ENCODE measurements at regions of chr3 and their contacts with region 1.

Region 1: DNA sequence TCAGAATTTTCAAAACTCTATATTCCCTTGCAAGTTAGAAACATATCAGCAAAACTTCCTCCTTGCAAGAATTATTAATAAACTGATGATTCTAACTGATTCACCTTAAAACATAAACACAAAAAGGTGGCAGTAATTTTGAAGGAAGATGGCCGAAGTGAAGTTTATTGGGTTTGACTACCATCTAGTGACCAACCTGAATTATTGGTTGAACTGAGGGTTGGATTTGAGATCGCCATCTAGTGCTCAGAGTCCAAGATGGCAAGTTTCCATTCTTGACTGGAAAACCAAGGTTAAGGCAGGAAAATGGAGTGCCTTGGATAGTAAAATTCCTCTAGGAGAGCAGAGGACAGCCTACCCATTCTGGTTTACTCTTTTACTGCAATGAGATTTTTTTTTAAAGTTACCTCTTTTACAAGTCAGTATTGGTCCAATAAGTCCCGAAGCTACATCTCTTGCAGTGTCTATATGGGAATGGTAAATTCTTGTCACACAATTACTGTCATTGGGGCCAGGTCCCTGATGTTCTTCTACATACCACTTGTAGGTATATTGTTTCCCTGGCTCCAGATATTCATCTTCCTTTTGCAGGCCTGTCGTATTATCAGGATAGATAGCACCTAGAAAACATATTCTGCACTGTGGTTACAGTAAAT is 51.6 kb upstream of the CP start:
- DNase-seq: peak; percentile 82
- ATAC-seq: peak; percentile 93
- H3K4me3 ChIP-seq: no peak overlapping the region
- H3K4me3 Mint-ChIP-seq: no peak overlapping the region
- H3K27ac ChIP-seq: no peak overlapping the region
- H3K27ac Mint-ChIP-seq: no peak overlapping the region
- H3K4me1 ChIP-seq: peaks cover 9 to 12% of the 10 kb centered on the region in 2 donors
- H3K4me1 Mint-ChIP-seq: peaks cover 17% of the 10 kb centered on the region
- H3K27me3 ChIP-seq: no peaks in the 10 kb centered on the region
- H3K27me3 Mint-ChIP-seq: no peaks in the 10 kb centered on the region
- CTCF ChIP-seq: peak; percentile 99

Region 2: DNA sequence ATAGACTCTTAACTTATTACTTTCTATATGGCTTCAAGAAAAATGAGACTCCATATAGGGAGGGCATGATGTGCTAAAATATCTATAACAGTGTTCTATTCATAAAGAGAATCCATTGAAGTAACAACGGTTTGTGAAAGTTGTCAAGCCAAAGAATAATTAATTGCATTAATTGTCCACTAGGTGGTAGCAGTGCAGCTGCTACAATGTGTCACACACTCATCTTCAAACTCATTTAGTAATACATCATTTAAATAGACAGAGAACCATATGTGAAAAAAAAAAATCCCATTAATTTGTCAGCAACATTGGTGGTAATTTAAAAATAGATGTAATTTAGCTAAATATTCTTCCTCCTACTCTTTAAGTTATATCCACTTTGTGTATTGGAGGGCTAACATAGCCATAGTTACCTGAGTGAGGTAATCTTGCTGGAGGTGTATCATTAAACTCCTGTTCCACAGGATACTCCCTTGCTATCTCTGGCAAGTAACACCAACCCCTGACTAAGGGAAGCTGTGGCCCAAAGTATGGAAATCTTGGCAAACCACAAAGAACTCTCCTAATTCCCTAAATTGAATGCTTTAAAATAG is 411.9 kb before region 1 on chr3:
- CTCF ChIA-PET with region 1: interaction called, 4 read pairs
- POLR2A ChIA-PET with region 1: no interaction called
- intact Hi-C with region 1: loop called (anchors 2 kb)
- DNase-seq: peak; percentile 37
- ATAC-seq: no peak
- H3K4me3 ChIP-seq: no peak overlapping the region
- H3K4me3 Mint-ChIP-seq: no peak overlapping the region
- H3K27ac ChIP-seq: no peak overlapping the region
- H3K27ac Mint-ChIP-seq: no peak overlapping the region
- H3K4me1 ChIP-seq: no peaks in the 10 kb centered on the region
- H3K4me1 Mint-ChIP-seq: no peaks in the 10 kb centered on the region
- H3K27me3 ChIP-seq: peaks cover 0 to 4% (median 0%) of the 10 kb centered on the region in 4 experiments
- H3K27me3 Mint-ChIP-seq: peaks cover 19% of the 10 kb centered on the region
- CTCF ChIP-seq: peak; percentile 90

Region 3: GRCh38 chr3:149086232-149086988 is 186.8 kb before region 1 on chr3 and contains the start of gene HLTF:
- CTCF ChIA-PET with region 1: no interaction called
- POLR2A ChIA-PET with region 1: no interaction called
- intact Hi-C with region 1: loop called (anchors 1 kb)
- DNase-seq: peak; percentile 93
- ATAC-seq: peak; percentile 99
- H3K4me3 ChIP-seq: peak within 1 kb of the TSS; percentile 65 to 95 (median 86)
- H3K4me3 Mint-ChIP-seq: peak within 1 kb of the TSS; percentile 91
- H3K27ac ChIP-seq: peak within 1 kb of the TSS in 1 of 2 donors; percentile 38
- H3K27ac Mint-ChIP-seq: peak within 1 kb of the TSS; percentile 87
- H3K4me1 ChIP-seq: peaks cover 10 to 14% of the 10 kb centered on the region in 2 donors
- H3K4me1 Mint-ChIP-seq: peaks cover 25% of the 10 kb centered on the region
- H3K27me3 ChIP-seq: no peaks in the 10 kb centered on the region
- H3K27me3 Mint-ChIP-seq: no peaks in the 10 kb centered on the region
- CTCF ChIP-seq: no peak
- total RNA-seq, gene HLTF: 19.1 and 22.9 TPM in 2 replicates

Region 4: GRCh38 chr3:149129326-149130205 is 143.7 kb before region 1 on chr3 and contains the start of gene HPS3:
- CTCF ChIA-PET with region 1: interaction called, 21 read pairs
- POLR2A ChIA-PET with region 1: no interaction called
- intact Hi-C with region 1: loop called (anchors 2 kb)
- DNase-seq: peak; percentile 93
- ATAC-seq: peak; percentile 94
- H3K4me3 ChIP-seq: peak within 1 kb of the TSS; percentile 91 to 98 (median 97)
- H3K4me3 Mint-ChIP-seq: peak within 1 kb of the TSS; percentile 90
- H3K27ac ChIP-seq: peak within 1 kb of the TSS; percentile 52 to 82
- H3K27ac Mint-ChIP-seq: peak within 1 kb of the TSS; percentile 87
- H3K4me1 ChIP-seq: peaks cover 32 to 39% of the 10 kb centered on the region in 2 donors
- H3K4me1 Mint-ChIP-seq: peaks cover 47% of the 10 kb centered on the region
- H3K27me3 ChIP-seq: no peaks in the 10 kb centered on the region
- H3K27me3 Mint-ChIP-seq: no peaks in the 10 kb centered on the region
- CTCF ChIP-seq: no peak
- total RNA-seq, gene HPS3: 48.1 and 53.0 TPM in 2 replicates

Region 5: GRCh38 chr3:149203758-149204157 is 69.5 kb before region 1 on chr3:
- CTCF ChIA-PET with region 1: interaction called, 5 read pairs
- POLR2A ChIA-PET with region 1: no interaction called
- intact Hi-C with region 1: loop called (anchors 2 kb)
- DNase-seq: peak; percentile 75
- ATAC-seq: peak; percentile 94
- H3K4me3 ChIP-seq: peak overlapping the region in 1 of 5 experiments; percentile 4
- H3K4me3 Mint-ChIP-seq: peak overlapping the region; percentile 3
- H3K27ac ChIP-seq: peak overlapping the region; percentile 9 to 25
- H3K27ac Mint-ChIP-seq: peak overlapping the region; percentile 46
- H3K4me1 ChIP-seq: peaks cover 16 to 17% of the 10 kb centered on the region in 2 donors
- H3K4me1 Mint-ChIP-seq: peaks cover 21% of the 10 kb centered on the region
- H3K27me3 ChIP-seq: no peaks in the 10 kb centered on the region
- H3K27me3 Mint-ChIP-seq: no peaks in the 10 kb centered on the region
- CTCF ChIP-seq: no peak

Region 6: GRCh38 chr3:149258298-149258697 is 14.9 kb before region 1 on chr3:
- CTCF ChIA-PET with region 1: interaction called, 11 read pairs
- POLR2A ChIA-PET with region 1: no interaction called
- intact Hi-C with region 1: no loop called
- DNase-seq: no peak
- ATAC-seq: no peak
- H3K4me3 ChIP-seq: no peak overlapping the region
- H3K4me3 Mint-ChIP-seq: no peak overlapping the region
- H3K27ac ChIP-seq: no peak overlapping the region
- H3K27ac Mint-ChIP-seq: no peak overlapping the region
- H3K4me1 ChIP-seq: no peaks in the 10 kb centered on the region
- H3K4me1 Mint-ChIP-seq: peaks cover 7% of the 10 kb centered on the region
- H3K27me3 ChIP-seq: no peaks in the 10 kb centered on the region
- H3K27me3 Mint-ChIP-seq: no peaks in the 10 kb centered on the region
- CTCF ChIP-seq: no peak

Measured in B cell (primary cell).